GM12878 (cell line): ENCODE measurements at regions of chr13 and their contacts with region 1.

Region 1: DNA sequence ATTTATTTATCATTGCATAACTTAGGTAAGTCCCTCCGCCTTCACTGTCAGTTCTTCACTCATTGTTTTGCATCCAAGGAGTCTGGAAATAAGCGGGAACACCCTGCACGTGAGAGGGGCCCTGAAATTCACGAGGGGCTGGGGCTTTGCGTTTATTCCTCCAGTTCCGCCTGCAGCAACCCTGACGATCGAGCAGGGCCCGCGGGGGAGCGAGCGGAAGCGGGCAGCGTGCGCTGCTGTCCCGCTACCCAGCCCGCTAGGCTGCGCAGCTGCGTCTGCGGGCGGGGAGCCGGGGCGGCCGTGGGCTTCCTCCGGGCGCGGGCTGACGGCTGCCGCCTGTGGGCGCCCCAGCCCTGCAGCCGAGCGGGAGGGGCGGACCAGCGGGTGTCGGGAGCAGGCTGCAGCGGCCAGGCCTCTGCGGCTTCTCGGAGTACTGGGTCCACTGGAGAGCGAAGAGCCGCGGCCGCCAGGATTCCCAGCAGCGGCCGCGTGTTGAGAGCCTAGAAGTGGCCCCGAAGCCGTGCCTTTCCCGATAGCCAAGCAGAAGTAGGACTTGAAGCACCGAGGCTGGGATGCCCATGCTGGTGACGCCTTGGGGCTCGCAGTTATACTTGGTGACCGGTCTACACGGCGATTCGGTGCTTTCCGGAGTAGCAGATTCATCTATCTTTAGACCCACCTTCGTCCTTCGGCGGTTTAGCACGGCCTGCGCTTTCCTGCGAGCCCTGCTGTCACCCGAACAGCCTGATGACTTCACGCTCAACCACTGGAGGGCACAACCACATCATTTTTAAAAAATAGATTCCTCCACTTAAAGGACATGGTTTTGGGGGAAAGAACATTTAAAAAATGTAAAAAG is 32.9 kb upstream of the SACS start:
- DNase-seq: peak; percentile 73
- ATAC-seq: peak; percentile 97
- H3K4me3 ChIP-seq: peak overlapping the region; percentile 46; the same call in 1 of the 2 replicates
- H3K27ac ChIP-seq: peak overlapping the region; percentile 29
- H3K4me1 ChIP-seq: peaks cover 33% of the 10 kb centered on the region
- H3K27me3 ChIP-seq: no peaks in the 10 kb centered on the region
- CTCF ChIP-seq: peak; percentile 44 to 75 (median 57); a peak in 5 of 6 replicates
- EP300 ChIP-seq: peak in 1 of 2 experiments; percentile 21; a peak in 1 of 4 replicates
- POLR2A ChIP-seq: peak; percentile 74
- RAD21 ChIP-seq: peak; percentile 78

Region 2: DNA sequence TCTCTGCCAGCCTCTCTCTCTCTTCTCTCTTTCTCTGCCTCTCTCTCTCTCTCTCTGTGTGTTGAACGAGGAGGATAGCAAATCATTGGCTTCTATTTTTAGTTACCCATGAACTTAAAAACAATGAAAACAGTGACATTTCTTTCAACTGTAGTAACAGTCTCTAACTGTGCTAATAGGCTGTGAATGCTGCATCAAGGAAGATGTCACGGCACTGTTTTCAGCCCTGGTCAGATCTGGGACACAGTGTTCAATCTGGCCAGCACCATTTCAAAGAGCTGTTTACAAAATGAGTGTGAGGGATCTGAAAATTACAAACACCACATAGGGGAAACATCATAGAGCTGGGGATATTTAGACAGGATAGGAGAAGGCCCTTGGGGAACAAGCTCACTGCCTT is 1078.5 kb before region 1 on chr13:
- CTCF ChIA-PET with region 1: no interaction called
- POLR2A ChIA-PET with region 1: no interaction called
- RAD21 ChIA-PET with region 1: no interaction called
- SMC1A ChIA-PET with region 1: no interaction called
- in situ Hi-C with region 1: no loop called
- intact Hi-C with region 1: no loop called
- DNase-seq: no peak
- ATAC-seq: no peak
- H3K4me3 ChIP-seq: no peak overlapping the region
- H3K27ac ChIP-seq: no peak overlapping the region
- H3K4me1 ChIP-seq: no peaks in the 10 kb centered on the region
- H3K27me3 ChIP-seq: no peaks in the 10 kb centered on the region
- CTCF ChIP-seq: no peak
- EP300 ChIP-seq: no peak
- POLR2A ChIP-seq: no peak
- RAD21 ChIP-seq: no peak

Region 3: DNA sequence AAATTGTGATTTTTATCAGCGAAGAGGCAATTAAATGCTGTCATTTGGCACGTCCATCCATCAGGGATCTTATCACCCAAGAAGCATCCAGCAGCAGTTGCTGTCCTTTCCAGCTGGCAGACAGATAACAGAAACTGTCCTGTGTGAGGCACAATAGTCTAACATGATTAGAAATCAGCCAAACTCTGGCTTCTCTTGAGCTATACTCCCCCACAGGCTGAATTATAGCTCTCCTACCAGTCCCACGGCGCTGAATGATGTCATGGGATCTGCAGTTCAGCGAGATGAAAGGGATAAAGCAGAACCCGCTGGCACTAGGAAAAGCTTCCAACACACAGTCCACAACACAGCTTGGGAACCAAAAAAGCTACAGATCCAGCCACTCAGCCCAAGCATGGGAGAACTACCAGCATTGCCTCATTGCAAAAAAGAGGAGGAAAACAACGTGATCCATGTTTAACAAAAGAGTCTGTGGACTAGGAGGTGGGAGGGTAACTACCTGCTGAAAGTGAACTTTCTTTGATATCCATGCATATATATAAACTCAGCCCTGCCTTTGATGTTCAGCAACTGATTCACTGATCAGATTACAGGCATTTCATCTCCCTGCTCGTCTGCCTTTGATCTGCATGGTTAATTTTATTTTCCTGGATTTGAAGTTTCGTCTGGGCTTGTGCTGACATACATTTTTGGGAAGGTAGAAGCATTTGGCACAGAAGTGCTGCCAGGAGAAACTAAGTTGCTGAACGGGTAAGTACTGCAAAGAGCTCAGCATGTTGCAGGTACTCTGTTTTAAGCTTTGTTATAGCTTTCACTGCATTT is 103.9 kb after region 1 on chr13 and contains the start of gene TNFRSF19:
- CTCF ChIA-PET with region 1: interaction called, 11 read pairs
- POLR2A ChIA-PET with region 1: no interaction called
- RAD21 ChIA-PET with region 1: interaction called, 3 read pairs
- SMC1A ChIA-PET with region 1: interaction called, 7 read pairs
- in situ Hi-C with region 1: no loop called
- intact Hi-C with region 1: loop called (anchors 5 kb)
- DNase-seq: no peak
- ATAC-seq: peak; percentile 55
- H3K4me3 ChIP-seq: peak within 1 kb of the TSS; percentile 71
- H3K27ac ChIP-seq: peak within 1 kb of the TSS; percentile 91
- H3K4me1 ChIP-seq: peaks cover 17% of the 10 kb centered on the region
- H3K27me3 ChIP-seq: no peaks in the 10 kb centered on the region; a peak in 1 of 4 replicates
- CTCF ChIP-seq: 0 out of 6 replicates have a peak, but pooled peaks of 1 of the 3 experiments have one; percentile 4
- EP300 ChIP-seq: no peak
- POLR2A ChIP-seq: peak; percentile 55; the same call in 1 of the 2 replicates
- RAD21 ChIP-seq: no peak; the same call in 1 of the 2 replicates
- polyA plus RNA-seq, gene TNFRSF19: 16.4 to 17.4 TPM

Region 4: GRCh38 chr13:23644527-23645138 is 178.3 kb after region 1 on chr13:
- CTCF ChIA-PET with region 1: no interaction called
- POLR2A ChIA-PET with region 1: no interaction called
- RAD21 ChIA-PET with region 1: no interaction called
- SMC1A ChIA-PET with region 1: no interaction called
- in situ Hi-C with region 1: no loop called
- intact Hi-C with region 1: no loop called
- DNase-seq: no peak
- ATAC-seq: no peak
- H3K4me3 ChIP-seq: no peak overlapping the region
- H3K27ac ChIP-seq: no peak overlapping the region; the same call in 1 of the 2 replicates
- H3K4me1 ChIP-seq: peaks cover 3% of the 10 kb centered on the region; the same call in 1 of the 2 replicates
- H3K27me3 ChIP-seq: no peaks in the 10 kb centered on the region
- CTCF ChIP-seq: no peak
- EP300 ChIP-seq: no peak
- POLR2A ChIP-seq: no peak
- RAD21 ChIP-seq: no peak

Region 5: DNA sequence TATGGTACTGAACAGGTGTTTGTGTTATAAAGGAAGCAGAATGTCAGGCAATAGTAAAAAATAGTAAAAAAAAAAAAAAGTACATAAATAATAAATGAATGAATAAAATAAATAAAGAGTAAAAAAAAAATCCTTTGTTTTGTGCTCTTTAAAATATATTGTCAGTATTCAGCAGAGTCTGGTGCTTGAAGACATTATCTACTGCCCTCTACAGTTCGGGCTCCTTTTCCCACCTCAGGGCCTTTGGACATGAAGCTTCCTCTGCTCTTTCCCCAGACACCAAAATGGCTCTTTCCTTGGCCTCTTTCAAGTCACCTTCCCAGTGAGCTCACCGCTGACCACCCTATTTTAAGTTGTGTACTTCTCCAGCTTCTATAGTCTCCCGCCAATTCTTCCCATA is 241.3 kb after region 1 on chr13:
- CTCF ChIA-PET with region 1: interaction called, 5 read pairs
- POLR2A ChIA-PET with region 1: no interaction called
- RAD21 ChIA-PET with region 1: interaction called, 4 read pairs
- SMC1A ChIA-PET with region 1: interaction called, 6 read pairs
- in situ Hi-C with region 1: no loop called
- intact Hi-C with region 1: loop called (anchors 2 kb)
- DNase-seq: no peak
- ATAC-seq: peak; percentile 66
- H3K4me3 ChIP-seq: no peak overlapping the region
- H3K27ac ChIP-seq: no peak overlapping the region
- H3K4me1 ChIP-seq: peaks cover 12% of the 10 kb centered on the region
- H3K27me3 ChIP-seq: no peaks in the 10 kb centered on the region; a peak in 1 of 4 replicates
- CTCF ChIP-seq: peak in 2 of 3 experiments; percentile 39 to 40; a peak in 5 of 6 replicates
- EP300 ChIP-seq: no peak
- POLR2A ChIP-seq: no peak
- RAD21 ChIP-seq: peak; percentile 50

Region 6: GRCh38 chr13:23899555-23899954 is 433.2 kb after region 1 on chr13:
- CTCF ChIA-PET with region 1: interaction called, 4 read pairs
- POLR2A ChIA-PET with region 1: no interaction called
- RAD21 ChIA-PET with region 1: interaction called, 5 read pairs
- SMC1A ChIA-PET with region 1: no interaction called
- in situ Hi-C with region 1: no loop called
- intact Hi-C with region 1: loop called (anchors 2 kb)
- DNase-seq: no peak
- ATAC-seq: peak; percentile 81
- H3K4me3 ChIP-seq: no peak overlapping the region
- H3K27ac ChIP-seq: no peak overlapping the region
- H3K4me1 ChIP-seq: no peaks in the 10 kb centered on the region
- H3K27me3 ChIP-seq: peaks cover 0 to 11% of the 10 kb centered on the region in 2 experiments; a peak in 2 of 4 replicates
- CTCF ChIP-seq: peak; percentile 53 to 59 (median 58)
- EP300 ChIP-seq: no peak
- POLR2A ChIP-seq: no peak
- RAD21 ChIP-seq: peak; percentile 75

Region 7: DNA sequence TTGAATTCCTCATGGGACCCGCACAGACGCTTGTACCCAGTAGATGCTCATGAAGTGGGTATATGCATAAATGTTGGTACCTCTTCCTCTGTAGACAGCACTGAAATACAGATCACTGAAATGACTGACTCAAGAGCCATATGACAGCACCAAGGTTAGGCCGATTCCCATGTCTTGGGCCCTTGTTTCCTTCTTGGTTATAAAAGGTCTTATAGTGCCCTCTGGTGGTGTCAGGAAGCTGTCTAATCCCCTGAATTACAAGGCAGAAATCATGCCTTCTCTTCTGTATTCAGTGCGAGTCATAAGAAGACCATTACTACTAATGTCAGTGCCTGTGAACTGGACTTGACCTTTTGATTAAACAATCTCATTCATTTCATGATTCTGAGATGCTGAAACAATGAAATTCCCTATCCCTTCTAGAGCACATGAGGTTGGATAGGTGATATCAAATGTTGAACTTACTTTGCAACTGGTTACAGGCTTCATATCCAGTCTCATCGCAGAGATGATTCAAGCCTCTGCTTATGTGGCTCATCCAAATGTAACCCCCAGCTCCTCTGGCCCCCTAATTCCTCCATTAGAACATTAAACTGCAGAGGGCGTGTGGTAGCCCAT is 753.8 kb after region 1 on chr13:
- CTCF ChIA-PET with region 1: no interaction called
- POLR2A ChIA-PET with region 1: no interaction called
- RAD21 ChIA-PET with region 1: no interaction called
- SMC1A ChIA-PET with region 1: no interaction called
- in situ Hi-C with region 1: no loop called
- intact Hi-C with region 1: loop called (anchors 10 kb)
- DNase-seq: no peak
- ATAC-seq: peak; percentile 89
- H3K4me3 ChIP-seq: no peak overlapping the region
- H3K27ac ChIP-seq: no peak overlapping the region
- H3K4me1 ChIP-seq: peaks cover 35% of the 10 kb centered on the region
- H3K27me3 ChIP-seq: no peaks in the 10 kb centered on the region
- CTCF ChIP-seq: peak; percentile 65 to 89 (median 71)
- EP300 ChIP-seq: no peak
- POLR2A ChIP-seq: no peak
- RAD21 ChIP-seq: peak; percentile 97